Heart right ventricle (tissue), 16 donors: ENCODE measurements at regions of chr5 and their contacts with region 1.

Region 1: GRCh38 chr5:2038321-2039179 is 155.8 kb upstream of the IRX4 start:
- DNase-seq: peak; percentile 24 to 80
- ATAC-seq: peak; percentile 91 to 98 (median 95)
- H3K4me3 ChIP-seq: peak overlapping the region; percentile 40 to 64 (median 54)
- H3K27ac ChIP-seq: no peak overlapping the region
- H3K4me1 ChIP-seq: peaks cover 0 to 8% (median 5%) of the 10 kb centered on the region in 9 donors
- H3K27me3 ChIP-seq: peaks cover 0 to 29% (median 0%) of the 10 kb centered on the region in 7 donors
- CTCF ChIP-seq: peak; percentile 58 to 78 (median 73)

Region 2: GRCh38 chr5:1503241-1504068 is 535.1 kb before region 1 on chr5:
- intact Hi-C with region 1: no loop called
- DNase-seq: peak; percentile 50
- ATAC-seq: peak in 7 of 8 donors; percentile 35 to 72 (median 52)
- H3K4me3 ChIP-seq: peak overlapping the region in 2 of 10 donors; percentile 12
- H3K27ac ChIP-seq: peak overlapping the region in 5 of 10 donors; percentile 12 to 87 (median 26)
- H3K4me1 ChIP-seq: peaks cover 8 to 77% (median 34%) of the 10 kb centered on the region in 9 donors
- H3K27me3 ChIP-seq: no peaks in the 10 kb centered on the region
- CTCF ChIP-seq: no peak

Region 3: GRCh38 chr5:1666812-1667588 is 371.6 kb before region 1 on chr5:
- intact Hi-C with region 1: loop called in 2 of 10 experiments (anchors 5 to 10 kb)
- DNase-seq: peak in 1 of 2 donors; percentile 45
- ATAC-seq: peak in 4 of 8 donors; percentile 9 to 55 (median 32)
- H3K4me3 ChIP-seq: peak overlapping the region in 9 of 10 donors; percentile 13 to 45 (median 26)
- H3K27ac ChIP-seq: no peak overlapping the region
- H3K4me1 ChIP-seq: peaks cover 0 to 13% (median 4%) of the 10 kb centered on the region in 9 donors
- H3K27me3 ChIP-seq: peaks cover 17 to 87% (median 66%) of the 10 kb centered on the region in 7 donors
- CTCF ChIP-seq: peak in 7 of 9 donors; percentile 7 to 39 (median 32)

Region 4: DNA sequence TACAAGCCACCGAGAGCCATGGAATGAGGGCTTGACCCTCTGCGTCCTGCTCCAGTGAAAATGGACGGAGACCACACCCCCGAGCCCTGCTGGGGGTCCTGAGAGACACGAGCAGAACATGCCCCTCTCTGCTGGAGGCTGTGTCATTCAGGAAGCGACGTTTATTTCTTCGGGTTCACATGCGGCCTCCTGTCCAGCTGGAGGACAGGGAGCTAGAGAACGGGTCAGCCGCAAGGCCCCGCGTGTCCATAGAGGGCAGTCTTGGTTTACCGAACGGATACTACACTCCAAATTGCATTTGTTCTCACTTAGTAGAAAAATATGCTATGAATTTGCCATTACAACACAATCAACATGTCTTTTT is 275.0 kb before region 1 on chr5:
- intact Hi-C with region 1: loop called (anchors 2 to 10 kb)
- DNase-seq: peak; percentile 19 to 35
- ATAC-seq: peak in 4 of 8 donors; percentile 67 to 74 (median 69)
- H3K4me3 ChIP-seq: no peak overlapping the region
- H3K27ac ChIP-seq: no peak overlapping the region
- H3K4me1 ChIP-seq: no peaks in the 10 kb centered on the region
- H3K27me3 ChIP-seq: peaks cover 0 to 54% (median 15%) of the 10 kb centered on the region in 7 donors
- CTCF ChIP-seq: peak; percentile 24 to 81 (median 71)

Region 5: DNA sequence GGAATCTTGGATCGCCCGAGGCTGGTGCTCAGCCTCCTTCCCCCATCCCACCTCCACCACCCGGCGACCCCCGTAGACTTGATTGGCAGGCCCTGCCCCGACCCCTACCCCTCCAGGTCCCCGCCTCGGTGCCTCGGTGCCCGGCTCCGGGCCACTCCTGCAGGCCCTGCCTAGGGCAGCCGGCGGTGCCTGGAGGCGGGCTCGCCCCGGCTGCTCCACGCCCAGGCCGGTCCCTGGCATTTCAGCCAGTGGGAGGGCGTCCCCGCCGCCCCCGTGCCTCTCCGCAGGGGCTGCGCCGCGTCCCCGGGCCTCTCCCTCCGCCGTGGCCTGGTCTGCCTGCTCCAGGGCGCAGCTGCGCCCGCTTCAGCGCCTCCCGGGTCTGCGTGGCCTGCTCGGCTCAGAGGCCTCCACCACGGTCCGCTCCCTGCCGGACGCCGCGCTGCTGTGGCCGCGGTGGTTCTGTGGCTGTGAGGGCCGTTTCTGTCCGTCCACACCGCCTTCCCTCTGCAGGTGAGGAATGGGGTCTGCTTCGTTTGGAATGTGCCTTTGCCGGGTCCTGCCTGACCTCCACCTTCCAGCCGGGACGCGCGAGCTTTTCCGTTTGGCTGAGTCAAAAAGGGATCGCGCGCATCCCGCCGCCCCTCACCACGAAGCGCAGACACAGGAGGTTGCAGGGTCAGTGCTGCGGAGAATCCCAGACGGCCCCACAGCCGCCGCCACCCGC is 107.5 kb before region 1 on chr5:
- intact Hi-C with region 1: loop called in 1 of 10 experiments (anchors 1 kb)
- DNase-seq: peak; percentile 16 to 54
- ATAC-seq: peak; percentile 77 to 90 (median 82)
- H3K4me3 ChIP-seq: peak overlapping the region; percentile 10 to 68 (median 54)
- H3K27ac ChIP-seq: peak overlapping the region; percentile 53 to 86 (median 84)
- H3K4me1 ChIP-seq: peaks cover 0 to 15% (median 0%) of the 10 kb centered on the region in 9 donors
- H3K27me3 ChIP-seq: peaks cover 0 to 43% (median 21%) of the 10 kb centered on the region in 7 donors
- CTCF ChIP-seq: no peak

Region 6: DNA sequence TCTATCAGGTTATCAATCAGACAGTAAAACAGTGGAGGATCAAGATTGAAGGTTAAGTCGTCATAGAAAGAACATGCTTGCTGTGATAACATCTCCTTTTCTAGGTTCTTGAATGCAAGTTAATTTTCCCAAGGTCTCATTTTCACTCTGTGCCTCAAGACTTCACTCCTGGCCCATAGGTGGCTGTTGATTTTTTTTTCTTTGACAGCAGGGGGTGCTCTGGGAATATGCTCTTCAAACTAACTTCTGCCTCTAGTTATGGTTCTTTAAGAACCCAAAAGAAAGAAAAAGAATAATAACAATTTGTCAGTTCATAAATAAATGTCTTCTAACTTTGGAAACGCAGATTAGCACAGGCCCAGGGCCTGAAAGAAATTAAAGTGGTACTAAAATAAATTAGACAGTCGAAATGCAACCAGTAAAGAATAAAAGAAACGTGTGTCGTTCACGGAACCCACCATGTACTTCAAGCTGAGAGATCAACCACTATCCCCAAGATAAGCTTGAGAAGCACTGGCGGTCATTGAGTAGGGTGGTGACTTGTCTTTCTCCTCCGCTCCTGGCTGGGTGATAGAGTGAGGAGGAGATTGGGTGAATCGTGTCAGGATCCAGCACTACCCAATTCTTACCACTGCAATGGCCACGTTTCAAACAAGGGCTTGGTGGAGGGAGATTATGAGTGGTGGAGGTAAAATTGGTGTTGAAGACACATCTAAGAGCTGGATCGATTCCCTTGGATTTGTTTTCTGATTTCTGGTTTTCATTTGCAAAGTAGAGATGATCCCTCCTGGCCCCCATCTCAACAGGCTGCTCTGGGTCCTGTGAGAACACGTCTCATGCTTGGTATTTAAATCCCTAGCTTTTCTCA is 62.4 kb before region 1 on chr5:
- intact Hi-C with region 1: loop called in 1 of 10 experiments (anchors 5 kb)
- DNase-seq: no peak
- ATAC-seq: no peak
- H3K4me3 ChIP-seq: no peak overlapping the region
- H3K27ac ChIP-seq: no peak overlapping the region
- H3K4me1 ChIP-seq: no peaks in the 10 kb centered on the region
- H3K27me3 ChIP-seq: no peaks in the 10 kb centered on the region
- CTCF ChIP-seq: peak in 7 of 9 donors; percentile 26 to 49 (median 36)

Region 7: GRCh38 chr5:2579126-2579525 is 540.6 kb after region 1 on chr5:
- intact Hi-C with region 1: no loop called
- DNase-seq: no peak
- ATAC-seq: no peak
- H3K4me3 ChIP-seq: no peak overlapping the region
- H3K27ac ChIP-seq: no peak overlapping the region
- H3K4me1 ChIP-seq: no peaks in the 10 kb centered on the region
- H3K27me3 ChIP-seq: peaks cover 0 to 15% (median 2%) of the 10 kb centered on the region in 7 donors
- CTCF ChIP-seq: no peak